ENCODE measurements at regions of chr7 and their contacts with region 1.

Region 1: DNA sequence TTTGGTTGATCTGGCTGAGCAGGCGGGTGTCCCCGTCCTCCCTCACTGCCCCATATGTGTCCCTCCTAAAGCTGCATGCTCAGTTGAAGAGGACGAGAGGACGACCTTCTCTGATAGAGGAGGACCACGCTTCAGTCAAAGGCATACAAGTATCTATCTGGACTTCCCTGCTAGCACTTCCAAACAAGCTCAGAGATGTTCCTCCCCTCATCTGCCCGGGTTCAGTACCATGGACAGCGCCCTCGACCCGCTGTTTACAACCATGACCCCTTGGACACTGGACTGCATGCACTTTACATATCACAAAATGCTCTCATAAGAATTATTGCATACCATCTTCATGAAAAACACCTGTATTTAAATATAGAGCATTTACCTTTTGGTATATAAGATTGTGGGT is 26.9 kb upstream of the TRIM56 start:
- DNase-seq: peak in 1 of 2 donors; percentile 68
- H3K4me3 ChIP-seq: no peak overlapping the region
- H3K27ac ChIP-seq: no peak overlapping the region
- H3K4me1 ChIP-seq: no peaks in the 10 kb centered on the region
- H3K27me3 ChIP-seq: peaks cover 0 to 22% of the 10 kb centered on the region in 2 donors
- CTCF ChIP-seq: no peak
- POLR2A ChIP-seq: no peak

Region 2: GRCh38 chr7:100894860-100895421 is 163.4 kb before region 1 on chr7:
- intact Hi-C with region 1: loop called (anchors 5 kb)
- DNase-seq: no peak
- H3K4me3 ChIP-seq: peak overlapping the region; percentile 35 to 67 (median 58)
- H3K27ac ChIP-seq: peak overlapping the region; percentile 0 to 29
- H3K4me1 ChIP-seq: peaks cover 0 to 6% of the 10 kb centered on the region in 2 donors
- H3K27me3 ChIP-seq: peaks cover 4 to 37% of the 10 kb centered on the region in 2 donors
- CTCF ChIP-seq: peak; percentile 62 to 82 (median 70)
- POLR2A ChIP-seq: no peak

Region 3: DNA sequence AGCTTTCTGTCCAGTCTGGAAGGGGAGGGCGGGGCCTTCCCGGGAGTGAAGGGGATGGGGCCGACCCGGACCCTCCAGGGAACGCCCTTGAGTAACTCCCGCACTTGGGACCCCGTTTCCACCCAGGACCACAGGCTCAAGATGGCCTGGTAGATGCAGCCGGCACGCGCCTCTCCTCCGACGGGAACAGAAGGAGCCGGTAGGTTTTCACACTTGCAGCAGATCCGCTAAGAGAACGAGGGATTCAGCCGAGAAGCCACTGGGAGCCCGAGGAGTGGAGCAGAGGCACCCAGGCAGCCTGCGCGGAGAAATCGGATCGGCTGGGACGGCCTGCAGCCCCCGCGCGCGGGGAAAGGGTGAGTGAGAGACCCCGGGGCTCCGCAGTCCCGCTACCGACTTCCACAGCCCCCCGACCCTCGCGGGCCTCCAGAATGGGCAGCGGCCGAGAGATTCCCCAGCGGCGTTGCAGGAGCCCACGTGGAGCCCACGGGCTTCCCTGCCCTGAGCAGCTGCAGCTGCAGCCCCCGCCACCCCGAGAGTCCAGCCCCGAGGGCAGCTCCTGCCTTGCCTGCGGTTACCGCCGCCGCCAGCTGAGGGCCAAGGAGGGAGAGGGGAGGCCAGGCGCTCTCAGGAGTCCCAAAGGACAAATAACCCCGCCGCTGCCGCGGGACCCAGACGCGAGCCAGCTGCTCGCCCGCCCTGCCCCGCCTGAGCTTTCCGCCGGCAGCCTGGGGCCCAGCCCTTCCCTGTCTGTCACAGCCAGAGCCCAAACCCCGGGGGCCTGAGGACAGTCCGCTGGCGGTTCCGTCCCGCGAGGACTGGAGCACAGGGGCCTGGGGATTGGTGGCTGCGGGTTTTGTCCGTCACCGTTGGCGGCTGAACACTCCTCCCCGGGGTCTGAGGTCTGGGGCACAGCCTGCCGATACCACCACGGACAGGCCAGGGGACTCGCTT is 241.4 kb after region 1 on chr7:
- intact Hi-C with region 1: loop called (anchors 5 kb)
- DNase-seq: no peak
- H3K4me3 ChIP-seq: peak overlapping the region in 1 of 3 donors; percentile 44
- H3K27ac ChIP-seq: no peak overlapping the region
- H3K4me1 ChIP-seq: no peaks in the 10 kb centered on the region
- H3K27me3 ChIP-seq: peaks cover 10 to 72% of the 10 kb centered on the region in 2 donors
- CTCF ChIP-seq: no peak
- POLR2A ChIP-seq: no peak

Measured in breast epithelium (tissue), 4 donors.